ENCODE measurements at regions of chr3 and their contacts with region 1.

Region 1: DNA sequence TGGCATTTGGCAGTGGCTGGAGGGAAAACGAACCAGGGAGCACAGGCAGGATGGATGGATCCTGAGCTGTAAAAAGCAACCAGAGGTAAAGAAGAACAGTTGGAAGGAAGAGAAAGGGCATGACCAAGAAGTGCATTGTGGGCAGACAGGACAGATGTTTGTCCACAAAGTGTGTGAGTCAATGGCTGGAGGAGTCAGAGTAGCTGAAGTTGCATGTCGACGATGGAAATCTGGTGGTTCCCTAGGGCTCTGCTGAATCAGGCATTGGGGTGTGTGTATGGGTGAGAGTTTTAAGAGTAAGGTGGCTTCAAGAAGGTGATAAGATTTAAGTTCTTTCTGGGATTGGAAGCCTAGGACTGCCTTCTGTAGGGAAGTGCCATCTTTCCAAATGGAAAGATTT is 214.0 kb upstream of the BHLHE40 start:
- DNase-seq: no peak
- CTCF ChIP-seq: no peak

Region 2: GRCh38 chr3:4751502-4752101 is 13.6 kb before region 1 on chr3:
- CTCF ChIA-PET with region 1: interaction called, 16 read pairs
- POLR2A ChIA-PET with region 1: interaction called, 5 read pairs
- DNase-seq: peak; percentile 49
- CTCF ChIP-seq: no peak